Testis (tissue), 5 donors: ENCODE measurements at regions of chr18 and their contacts with region 1.

Region 1: GRCh38 chr18:32470713-32471633 is at the start of gene GAREM1:
- DNase-seq: peak; percentile 96
- H3K4me3 ChIP-seq: peak within 1 kb of the TSS; percentile 63 to 78
- H3K27ac ChIP-seq: peak within 1 kb of the TSS; percentile 64 to 88
- H3K4me1 ChIP-seq: peaks cover 9% of the 10 kb centered on the region
- H3K27me3 ChIP-seq: no peaks in the 10 kb centered on the region
- CTCF ChIP-seq: peak; percentile 66 to 77 (median 67)
- POLR2A ChIP-seq: peak; percentile 65
- total RNA-seq, gene GAREM1: 15.2 to 16.2 TPM

Region 2: GRCh38 chr18:32271672-32272208 is 199.2 kb before region 1 on chr18:
- intact Hi-C with region 1: loop called (anchors 5 kb)
- DNase-seq: no peak
- H3K4me3 ChIP-seq: no peak overlapping the region
- H3K27ac ChIP-seq: no peak overlapping the region
- H3K4me1 ChIP-seq: no peaks in the 10 kb centered on the region
- H3K27me3 ChIP-seq: no peaks in the 10 kb centered on the region
- CTCF ChIP-seq: peak; percentile 55 to 71 (median 60)
- POLR2A ChIP-seq: no peak

Region 3: GRCh38 chr18:32552421-32553030 is 81.6 kb after region 1 on chr18:
- intact Hi-C with region 1: no loop called
- DNase-seq: peak; percentile 83
- H3K4me3 ChIP-seq: no peak overlapping the region
- H3K27ac ChIP-seq: no peak overlapping the region
- H3K4me1 ChIP-seq: peaks cover 10% of the 10 kb centered on the region
- H3K27me3 ChIP-seq: no peaks in the 10 kb centered on the region
- CTCF ChIP-seq: peak; percentile 46 to 71 (median 70)
- POLR2A ChIP-seq: no peak